Activated T-helper 1 cell treated with anti-CD3 and anti-CD28 coated beads, Interleukin-12 subunit alpha, Interleukin-12 subunit beta, Interleukin-2, Interleukin-4 antibody, amounts not matched to agents 30 ng/mL and 10 ng/mL and 1 ng/mL, durations not matched to agents 14 hours and 24 hours and 36 hours (primary cell): ENCODE measurements at regions of chr11 and their contacts with region 1.

Region 1: DNA sequence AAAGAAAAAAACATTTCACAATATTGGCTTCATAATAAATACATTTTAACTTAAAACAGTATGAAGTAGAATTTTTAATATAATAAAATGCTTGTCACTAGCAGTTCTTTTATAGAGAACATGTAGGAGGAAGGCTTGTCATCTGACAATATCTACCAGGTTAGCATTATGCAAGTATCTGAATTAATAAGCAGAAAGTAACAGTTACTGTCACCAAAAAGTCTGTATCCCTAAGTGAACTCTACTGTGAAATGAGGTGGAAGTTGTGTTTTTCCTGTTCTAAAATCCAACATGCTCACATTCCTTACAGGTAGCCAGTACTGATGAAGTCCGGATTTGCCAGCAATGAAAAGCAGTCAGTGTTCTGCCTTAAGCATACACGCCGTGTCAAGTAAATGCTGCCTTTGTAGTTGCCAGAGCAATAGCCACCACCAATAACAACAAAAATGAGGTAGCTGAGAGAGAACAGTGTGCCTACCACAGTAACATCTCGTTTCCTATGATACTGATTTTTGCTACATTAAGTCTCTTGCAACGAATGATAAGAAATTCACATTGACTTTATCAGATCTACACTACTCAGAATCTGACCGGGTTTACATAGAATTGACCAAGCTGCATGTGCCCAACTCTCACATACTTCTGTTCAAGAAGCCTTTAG is 95.5 kb downstream of the SIK3 start:
- DNase-seq: no peak
- H3K4me3 Mint-ChIP-seq: peak overlapping the region; percentile 26
- H3K27ac Mint-ChIP-seq: peak overlapping the region; percentile 81
- H3K4me1 Mint-ChIP-seq: peaks cover 62% of the 10 kb centered on the region
- H3K27me3 Mint-ChIP-seq: no peaks in the 10 kb centered on the region

Region 2: DNA sequence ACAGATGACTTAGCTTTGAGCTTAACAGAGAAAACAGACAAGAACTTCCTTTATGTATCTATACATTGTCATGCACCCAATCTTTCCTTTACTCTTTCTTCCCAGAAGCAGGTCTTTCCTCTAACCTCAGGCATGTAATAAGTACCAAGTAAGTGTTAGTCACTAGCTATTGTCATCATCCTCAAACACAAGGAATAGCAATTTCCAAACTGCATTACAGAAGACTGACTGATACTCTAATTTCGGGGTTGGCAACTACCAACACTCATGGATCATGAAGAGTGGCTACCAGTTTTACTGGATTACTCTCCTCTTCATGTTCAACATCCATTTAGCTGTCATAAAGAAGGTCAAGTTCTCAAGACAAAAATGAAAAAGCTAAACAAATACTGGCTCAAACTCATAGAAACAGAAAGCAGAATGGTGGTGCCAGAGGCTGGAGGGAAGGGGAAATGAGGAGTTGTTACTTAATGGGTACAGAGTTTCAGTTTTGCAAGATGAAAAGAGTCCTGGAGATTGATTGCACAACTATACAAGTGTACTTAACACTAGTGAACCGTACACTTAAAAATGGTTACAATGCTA is 16.2 kb before region 1 on chr11:
- intact Hi-C with region 1: loop called (anchors 1 kb)
- DNase-seq: no peak
- H3K4me3 Mint-ChIP-seq: peak overlapping the region; percentile 65
- H3K27ac Mint-ChIP-seq: peak overlapping the region; percentile 73
- H3K4me1 Mint-ChIP-seq: peaks cover 70% of the 10 kb centered on the region
- H3K27me3 Mint-ChIP-seq: no peaks in the 10 kb centered on the region